ENCODE measurements at regions of chrX and their contacts with region 1.

Region 1: GRCh38 chrX:12814420-12814819 is 23.2 kb downstream of the PRPS2 start:
- DNase-seq: peak; percentile 38 to 56 (median 47)
- H3K4me3 ChIP-seq: no peak overlapping the region
- H3K4me3 Mint-ChIP-seq: no peak overlapping the region
- H3K27ac ChIP-seq: no peak overlapping the region
- H3K27ac Mint-ChIP-seq: no peak overlapping the region
- H3K4me1 ChIP-seq: peaks cover 2 to 5% of the 10 kb centered on the region in 2 donors
- H3K4me1 Mint-ChIP-seq: peaks cover 18% of the 10 kb centered on the region
- H3K27me3 ChIP-seq: peaks cover 0 to 9% of the 10 kb centered on the region in 2 donors
- H3K27me3 Mint-ChIP-seq: peaks cover 0 to 14% (median 2%) of the 10 kb centered on the region in 3 donors
- CTCF ChIP-seq: peak; percentile 59

Region 2: DNA sequence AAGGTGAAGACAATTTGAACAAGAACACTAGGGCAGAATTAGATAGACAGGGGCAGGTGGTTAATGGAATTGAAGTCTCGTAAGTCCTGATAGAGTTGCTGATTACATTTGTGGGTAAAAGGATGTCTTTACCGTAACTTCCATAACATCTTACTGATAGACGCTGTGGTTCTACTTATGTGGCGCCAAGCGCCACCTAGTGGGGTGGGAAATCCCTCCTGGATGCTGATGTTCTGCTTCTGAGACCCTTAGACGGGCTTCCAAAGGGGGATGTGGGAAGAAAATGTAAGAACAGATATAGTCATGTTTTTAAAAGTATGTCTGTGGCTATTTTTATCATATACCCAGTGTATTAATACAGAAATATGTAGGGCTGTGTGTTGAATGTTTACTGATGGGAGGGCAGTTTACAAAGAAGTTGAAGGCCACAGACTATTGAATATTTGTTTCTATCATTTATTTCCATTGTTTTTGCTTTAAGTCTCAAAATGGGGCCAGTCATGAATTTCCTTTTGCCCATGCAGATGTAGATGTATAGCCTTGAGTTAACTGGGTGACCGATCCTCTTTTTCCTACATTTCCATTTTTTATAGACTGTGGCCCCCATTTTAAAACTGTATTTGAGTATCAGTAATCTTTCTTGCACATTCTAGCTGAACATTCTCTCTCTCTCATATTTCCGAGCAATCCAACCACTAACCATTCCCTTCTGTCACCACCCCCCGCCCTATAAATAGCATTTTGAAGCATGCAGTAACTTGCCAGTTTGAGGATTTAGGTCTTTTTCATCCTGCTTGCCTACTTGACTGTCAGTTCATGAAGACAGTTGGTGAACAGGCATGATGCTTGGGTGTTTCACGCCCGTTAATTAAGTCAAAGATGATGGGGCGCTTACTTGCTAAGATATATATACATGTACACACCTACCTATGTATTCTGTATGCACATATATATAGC is 79.9 kb after region 1 on chrX:
- intact Hi-C with region 1: loop called (anchors 5 kb)
- DNase-seq: peak; percentile 30 to 66 (median 53)
- H3K4me3 ChIP-seq: peak overlapping the region in 1 of 3 experiments; percentile 16
- H3K4me3 Mint-ChIP-seq: peak overlapping the region; percentile 2 to 59
- H3K27ac ChIP-seq: no peak overlapping the region
- H3K27ac Mint-ChIP-seq: peak overlapping the region in 6 of 7 donors; percentile 19 to 84 (median 40)
- H3K4me1 ChIP-seq: peaks cover 76 to 83% of the 10 kb centered on the region in 2 donors
- H3K4me1 Mint-ChIP-seq: peaks cover 80% of the 10 kb centered on the region
- H3K27me3 ChIP-seq: peaks cover 0 to 3% of the 10 kb centered on the region in 2 donors
- H3K27me3 Mint-ChIP-seq: peaks cover 0 to 22% (median 1%) of the 10 kb centered on the region in 3 donors
- CTCF ChIP-seq: peak; percentile 79